HepG2 (cell line): ENCODE measurements at regions of chr5 and their contacts with region 1.

Region 1: DNA sequence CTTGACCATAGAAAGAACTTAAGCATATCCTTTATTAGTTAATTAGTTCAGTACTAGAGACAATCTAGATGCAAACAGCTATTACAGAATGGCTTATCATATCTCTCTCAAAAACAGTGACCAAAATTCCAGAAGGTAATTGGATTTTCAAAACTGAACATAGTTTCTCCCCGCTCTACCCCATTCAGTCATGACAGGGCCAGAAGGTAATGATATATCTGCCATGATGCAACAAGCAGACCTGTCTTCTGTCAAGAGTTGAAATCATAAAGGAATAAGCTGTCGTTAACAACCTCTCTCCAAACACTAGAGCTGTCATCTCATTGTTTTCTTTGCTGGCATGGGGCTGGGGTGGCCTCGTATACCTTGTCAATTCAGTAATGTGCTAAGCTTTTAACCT is 200.5 kb upstream of the POU5F2 start:
- DNase-seq: no peak
- ATAC-seq: no peak
- H3K4me3 ChIP-seq: no peak overlapping the region
- H3K27ac ChIP-seq: no peak overlapping the region
- H3K4me1 ChIP-seq: no peaks in the 10 kb centered on the region
- H3K27me3 ChIP-seq: no peaks in the 10 kb centered on the region
- CTCF ChIP-seq: no peak
- EP300 ChIP-seq: no peak
- POLR2A ChIP-seq: no peak
- RAD21 ChIP-seq: no peak

Region 2: DNA sequence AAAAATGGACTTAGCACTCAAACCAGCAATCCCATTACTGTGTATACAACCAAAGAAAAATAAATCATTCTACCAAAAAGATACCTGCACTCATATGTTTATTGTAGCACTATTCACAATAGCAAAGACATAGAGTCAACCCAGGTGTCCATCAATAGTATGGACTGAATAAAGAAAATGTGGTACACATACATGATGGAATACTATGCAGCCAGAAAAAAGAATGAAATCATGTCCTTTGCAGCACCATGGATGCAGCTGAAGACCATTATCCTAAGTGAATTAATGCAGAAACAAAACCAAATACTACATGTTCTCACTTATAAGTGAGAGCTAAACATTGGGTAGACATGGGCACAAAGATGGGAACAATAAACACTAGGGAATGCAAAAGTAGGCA is 36.3 kb after region 1 on chr5:
- CTCF ChIA-PET with region 1: no interaction called
- POLR2A ChIA-PET with region 1: no interaction called
- in situ Hi-C with region 1: no loop called
- intact Hi-C with region 1: loop called (anchors 5 kb)
- DNase-seq: no peak
- ATAC-seq: no peak
- H3K4me3 ChIP-seq: no peak overlapping the region
- H3K27ac ChIP-seq: no peak overlapping the region
- H3K4me1 ChIP-seq: no peaks in the 10 kb centered on the region
- H3K27me3 ChIP-seq: no peaks in the 10 kb centered on the region
- CTCF ChIP-seq: no peak
- EP300 ChIP-seq: no peak
- POLR2A ChIP-seq: no peak
- RAD21 ChIP-seq: no peak

Region 3: GRCh38 chr5:93995126-93995621 is 53.3 kb after region 1 on chr5:
- CTCF ChIA-PET with region 1: no interaction called
- POLR2A ChIA-PET with region 1: no interaction called
- in situ Hi-C with region 1: no loop called
- intact Hi-C with region 1: no loop called
- DNase-seq: no peak
- ATAC-seq: no peak
- H3K4me3 ChIP-seq: no peak overlapping the region
- H3K27ac ChIP-seq: no peak overlapping the region
- H3K4me1 ChIP-seq: 0 out of 2 replicates have a peak, but pooled peaks cover 6% of the 10 kb centered on the region
- H3K27me3 ChIP-seq: no peaks in the 10 kb centered on the region
- CTCF ChIP-seq: no peak
- EP300 ChIP-seq: no peak
- POLR2A ChIP-seq: no peak
- RAD21 ChIP-seq: no peak

Region 4: GRCh38 chr5:94021246-94021645 is 79.3 kb after region 1 on chr5:
- CTCF ChIA-PET with region 1: no interaction called
- POLR2A ChIA-PET with region 1: no interaction called
- in situ Hi-C with region 1: no loop called
- intact Hi-C with region 1: no loop called
- DNase-seq: peak; percentile 73
- ATAC-seq: no peak
- H3K4me3 ChIP-seq: no peak overlapping the region
- H3K27ac ChIP-seq: no peak overlapping the region
- H3K4me1 ChIP-seq: peaks cover 15% of the 10 kb centered on the region
- H3K27me3 ChIP-seq: no peaks in the 10 kb centered on the region
- CTCF ChIP-seq: no peak
- EP300 ChIP-seq: 0 out of 4 replicates have a peak, but pooled peaks of 1 of the 2 experiments have one; percentile 15
- POLR2A ChIP-seq: no peak
- RAD21 ChIP-seq: no peak